ENCODE measurements at regions of chr7 and their contacts with region 1.

Region 1: GRCh38 chr7:7719236-7719635 is 829 bp upstream of the RPA3 start:
- DNase-seq: peak in 8 of 9 donors; percentile 2 to 39 (median 24)
- ATAC-seq: peak; percentile 68
- H3K4me3 ChIP-seq: no peak overlapping the region
- H3K4me3 Mint-ChIP-seq: peak overlapping the region in 1 of 10 donors; percentile 37
- H3K27ac ChIP-seq: no peak overlapping the region
- H3K27ac Mint-ChIP-seq: peak overlapping the region in 4 of 9 donors; percentile 25 to 82 (median 50)
- H3K4me1 ChIP-seq: no peaks in the 10 kb centered on the region
- H3K4me1 Mint-ChIP-seq: peaks cover 3 to 20% (median 13%) of the 10 kb centered on the region in 7 donors
- H3K27me3 ChIP-seq: no peaks in the 10 kb centered on the region
- H3K27me3 Mint-ChIP-seq: no peaks in the 10 kb centered on the region

Region 2: DNA sequence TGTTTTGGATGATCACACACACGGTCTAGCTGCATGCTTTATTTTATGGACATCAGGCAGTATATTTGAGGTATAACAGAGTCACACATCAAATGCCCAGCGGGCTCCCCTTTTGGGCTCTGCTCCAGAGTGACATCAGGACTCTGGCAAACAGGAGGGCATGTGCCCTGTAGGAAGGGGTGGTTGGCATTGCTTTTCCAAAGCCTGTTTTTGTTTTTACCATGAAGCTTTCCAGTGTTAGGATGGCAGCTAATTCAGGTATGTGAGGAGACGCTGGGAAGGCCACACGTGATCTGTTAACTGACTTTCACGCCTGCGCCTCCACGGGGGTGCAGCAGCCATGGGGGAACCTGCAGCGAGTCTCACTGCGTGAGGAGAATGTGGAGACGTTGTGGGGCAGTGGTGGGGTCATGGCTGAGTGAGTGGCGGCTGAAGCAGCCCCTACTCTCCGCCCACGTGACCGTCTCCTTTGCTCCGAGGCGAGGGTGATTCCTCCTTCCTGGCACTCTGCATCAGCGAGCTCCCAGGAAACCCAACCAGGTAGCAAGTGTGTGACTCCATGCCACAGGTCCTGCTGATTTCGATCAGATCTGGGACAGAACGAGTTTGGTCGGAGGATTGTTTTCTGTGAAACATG is 1570.4 kb before region 1 on chr7:
- CTCF ChIA-PET with region 1: no interaction called
- POLR2A ChIA-PET with region 1: no interaction called
- intact Hi-C with region 1: no loop called
- DNase-seq: no peak
- ATAC-seq: no peak
- H3K4me3 ChIP-seq: no peak overlapping the region
- H3K4me3 Mint-ChIP-seq: no peak overlapping the region
- H3K27ac ChIP-seq: no peak overlapping the region
- H3K27ac Mint-ChIP-seq: no peak overlapping the region
- H3K4me1 ChIP-seq: no peaks in the 10 kb centered on the region
- H3K4me1 Mint-ChIP-seq: peaks cover 0 to 5% (median 0%) of the 10 kb centered on the region in 7 donors
- H3K27me3 ChIP-seq: no peaks in the 10 kb centered on the region
- H3K27me3 Mint-ChIP-seq: no peaks in the 10 kb centered on the region

Region 3: DNA sequence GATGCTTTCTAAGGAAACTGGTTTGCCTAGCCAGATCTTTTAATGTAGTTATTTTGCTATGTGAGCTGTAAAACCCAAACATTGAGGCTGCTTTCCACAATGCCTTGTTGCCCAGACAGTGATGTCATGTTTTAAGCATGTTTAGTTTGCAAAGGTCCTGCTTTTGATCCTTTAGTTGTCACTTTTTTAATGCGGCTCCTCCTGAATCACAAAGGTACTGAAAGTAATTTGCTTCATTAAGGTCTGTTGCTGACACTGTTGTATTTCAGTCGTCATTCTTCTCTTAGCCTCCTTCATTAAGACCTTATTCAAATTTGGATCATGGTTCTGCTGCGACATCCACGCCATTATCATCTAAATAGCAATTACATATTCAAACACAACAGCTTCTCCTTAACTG is 11.4 kb before region 1 on chr7:
- CTCF ChIA-PET with region 1: no interaction called
- POLR2A ChIA-PET with region 1: no interaction called
- intact Hi-C with region 1: loop called in 1 of 2 experiments (anchors 1 kb)
- DNase-seq: no peak
- ATAC-seq: no peak
- H3K4me3 ChIP-seq: no peak overlapping the region
- H3K4me3 Mint-ChIP-seq: no peak overlapping the region
- H3K27ac ChIP-seq: no peak overlapping the region
- H3K27ac Mint-ChIP-seq: no peak overlapping the region
- H3K4me1 ChIP-seq: no peaks in the 10 kb centered on the region
- H3K4me1 Mint-ChIP-seq: peaks cover 7 to 42% (median 26%) of the 10 kb centered on the region in 7 donors
- H3K27me3 ChIP-seq: no peaks in the 10 kb centered on the region
- H3K27me3 Mint-ChIP-seq: no peaks in the 10 kb centered on the region

Region 4: GRCh38 chr7:7751243-7752092 is 32.2 kb after region 1 on chr7:
- CTCF ChIA-PET with region 1: no interaction called
- POLR2A ChIA-PET with region 1: no interaction called
- intact Hi-C with region 1: loop called in 1 of 2 experiments (anchors 5 kb)
- DNase-seq: no peak
- ATAC-seq: no peak
- H3K4me3 ChIP-seq: no peak overlapping the region
- H3K4me3 Mint-ChIP-seq: no peak overlapping the region
- H3K27ac ChIP-seq: no peak overlapping the region
- H3K27ac Mint-ChIP-seq: no peak overlapping the region
- H3K4me1 ChIP-seq: no peaks in the 10 kb centered on the region
- H3K4me1 Mint-ChIP-seq: peaks cover 0 to 12% (median 4%) of the 10 kb centered on the region in 7 donors
- H3K27me3 ChIP-seq: no peaks in the 10 kb centered on the region
- H3K27me3 Mint-ChIP-seq: no peaks in the 10 kb centered on the region

Region 5: GRCh38 chr7:8268817-8269216 is 549.6 kb after region 1 on chr7:
- CTCF ChIA-PET with region 1: no interaction called
- POLR2A ChIA-PET with region 1: no interaction called
- intact Hi-C with region 1: no loop called
- DNase-seq: no peak
- ATAC-seq: no peak
- H3K4me3 ChIP-seq: no peak overlapping the region
- H3K4me3 Mint-ChIP-seq: no peak overlapping the region
- H3K27ac ChIP-seq: no peak overlapping the region
- H3K27ac Mint-ChIP-seq: no peak overlapping the region
- H3K4me1 ChIP-seq: no peaks in the 10 kb centered on the region
- H3K4me1 Mint-ChIP-seq: peaks cover 0 to 2% (median 0%) of the 10 kb centered on the region in 7 donors
- H3K27me3 ChIP-seq: no peaks in the 10 kb centered on the region
- H3K27me3 Mint-ChIP-seq: peaks cover 29 to 56% (median 44%) of the 10 kb centered on the region in 5 donors

Measured in naive thymus-derived CD4-positive, alpha-beta T cell (primary cell).